AG04450 (cell line): ENCODE measurements at regions of chr14 and their contacts with region 1.

Region 1: DNA sequence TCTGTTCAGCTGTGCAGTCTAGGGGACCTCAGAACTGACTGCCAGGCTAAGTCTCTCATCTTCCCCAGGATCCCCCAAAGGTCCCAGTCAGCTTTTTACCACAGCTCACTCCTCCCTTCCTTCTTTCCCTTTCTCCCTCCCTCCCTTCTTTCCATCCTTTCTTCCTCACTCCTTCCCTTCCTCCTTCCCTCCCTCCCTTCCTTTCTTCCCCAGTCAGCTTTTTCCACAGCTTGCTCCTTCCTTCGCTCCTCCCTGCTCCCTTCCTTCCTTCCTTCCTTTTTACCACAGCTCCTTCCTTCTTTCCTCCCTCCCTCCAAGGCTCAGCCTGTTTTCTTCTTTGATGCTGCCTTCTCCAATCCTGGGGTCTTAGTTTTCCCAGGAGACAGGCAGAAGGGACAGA is 39.2 kb downstream of the ATG14 start:
- DNase-seq: no peak
- H3K4me3 ChIP-seq: no peak overlapping the region
- H3K27ac ChIP-seq: no peak overlapping the region
- H3K27me3 ChIP-seq: no peaks in the 10 kb centered on the region
- CTCF ChIP-seq: no peak

Region 2: DNA sequence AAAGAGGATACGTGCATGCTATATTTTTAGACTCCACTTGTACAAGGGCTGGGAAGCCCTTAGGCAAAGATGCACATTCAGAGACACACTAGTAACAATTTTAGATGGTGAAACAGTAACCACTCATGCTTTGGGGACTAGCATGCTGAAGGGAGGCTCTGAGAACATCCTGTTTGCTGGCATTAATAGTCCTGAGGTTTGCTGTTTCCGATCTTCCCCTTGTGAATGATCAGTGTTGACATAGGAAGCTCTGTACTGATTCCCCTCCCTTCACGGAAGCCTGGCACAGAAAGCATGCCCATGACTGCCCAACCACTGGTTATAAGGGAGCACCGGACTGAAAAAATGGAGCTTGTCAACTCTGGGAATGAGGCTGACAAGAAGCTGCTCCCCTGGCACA is 634.4 kb before region 1 on chr14:
- CTCF ChIA-PET with region 1: no interaction called
- POLR2A ChIA-PET with region 1: no interaction called
- DNase-seq: no peak
- H3K4me3 ChIP-seq: no peak overlapping the region
- H3K27ac ChIP-seq: no peak overlapping the region
- H3K27me3 ChIP-seq: no peaks in the 10 kb centered on the region
- CTCF ChIP-seq: no peak

Region 3: DNA sequence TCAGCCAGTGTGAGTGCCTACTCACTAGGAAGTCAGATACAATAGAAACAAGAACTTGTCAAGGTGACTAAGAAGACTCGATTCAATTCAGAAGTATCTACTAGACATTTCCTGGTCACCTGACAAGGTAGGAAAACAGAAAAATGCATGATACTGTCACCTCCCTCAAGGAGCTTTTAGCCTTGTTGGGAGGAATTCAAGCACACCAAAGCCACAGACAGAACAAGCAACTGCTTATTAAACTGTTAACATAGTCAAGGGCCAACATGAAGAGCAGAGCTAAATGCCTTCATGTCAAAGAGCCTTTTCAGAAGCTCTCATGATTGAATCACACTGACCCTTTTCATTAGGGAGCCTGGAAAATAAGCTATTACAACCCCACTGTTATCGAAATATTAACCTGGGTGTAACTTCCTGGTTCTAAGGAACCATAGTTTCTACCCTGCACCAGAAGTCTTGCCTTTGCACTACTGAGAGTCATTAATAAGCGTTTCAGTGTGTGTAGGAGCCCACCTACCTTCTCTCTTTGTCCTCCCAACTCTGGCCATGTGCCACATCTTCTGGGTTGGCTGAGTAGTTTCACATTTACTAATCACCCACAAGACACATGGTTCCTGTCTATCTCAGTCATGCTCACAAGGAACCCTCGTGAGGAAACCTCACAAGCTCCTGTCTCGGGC is 274.4 kb before region 1 on chr14:
- CTCF ChIA-PET with region 1: no interaction called
- POLR2A ChIA-PET with region 1: no interaction called
- DNase-seq: no peak
- H3K4me3 ChIP-seq: no peak overlapping the region
- H3K27ac ChIP-seq: no peak overlapping the region
- H3K27me3 ChIP-seq: no peaks in the 10 kb centered on the region
- CTCF ChIP-seq: no peak

Region 4: GRCh38 chr14:55389330-55389729 is 16.9 kb after region 1 on chr14:
- CTCF ChIA-PET with region 1: no interaction called
- POLR2A ChIA-PET with region 1: interaction called, 11 read pairs
- DNase-seq: peak; percentile 72
- H3K4me3 ChIP-seq: no peak overlapping the region
- H3K27ac ChIP-seq: peak overlapping the region; percentile 91
- H3K27me3 ChIP-seq: no peaks in the 10 kb centered on the region
- CTCF ChIP-seq: no peak